Activated naive CD8-positive, alpha-beta T cell treated with anti-CD3 and anti-CD28 coated beads, Interleukin-2, amount 10 ng/mL, durations not matched to agents 7 days and 5 days (primary cell): ENCODE measurements at regions of chr4 and their contacts with region 1.

Region 1: DNA sequence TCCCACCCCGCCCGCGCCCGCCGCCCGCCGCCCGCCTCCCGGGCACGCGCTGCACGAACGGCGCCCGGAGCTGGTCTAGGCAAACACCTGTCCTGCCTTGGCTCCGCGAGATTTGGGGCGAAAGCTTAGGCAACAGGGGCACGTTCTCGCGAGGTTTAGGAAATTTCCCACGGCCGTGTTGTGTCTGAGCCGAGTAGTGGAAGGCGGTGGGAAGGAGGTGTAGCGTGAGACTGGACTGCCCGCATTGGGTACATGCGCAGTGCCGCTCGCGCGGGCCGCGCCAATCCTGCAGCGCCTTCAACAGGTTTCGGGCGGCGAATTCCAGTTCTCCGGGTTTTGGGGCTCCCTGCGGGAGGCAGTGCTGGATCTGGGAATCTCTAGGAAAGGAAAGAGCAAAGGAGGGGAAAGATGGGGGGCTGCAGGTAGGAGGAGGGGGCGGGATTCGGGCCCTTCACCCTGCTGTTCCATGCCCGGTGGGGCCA is 1.3 kb upstream of the RBPJ start:
- DNase-seq: peak; percentile 95
- ATAC-seq: peak; percentile 78
- H3K4me3 Mint-ChIP-seq: peak overlapping the region; percentile 100
- H3K27ac Mint-ChIP-seq: peak overlapping the region; percentile 99
- H3K4me1 Mint-ChIP-seq: peaks cover 39% of the 10 kb centered on the region
- H3K27me3 Mint-ChIP-seq: no peaks in the 10 kb centered on the region

Region 2: DNA sequence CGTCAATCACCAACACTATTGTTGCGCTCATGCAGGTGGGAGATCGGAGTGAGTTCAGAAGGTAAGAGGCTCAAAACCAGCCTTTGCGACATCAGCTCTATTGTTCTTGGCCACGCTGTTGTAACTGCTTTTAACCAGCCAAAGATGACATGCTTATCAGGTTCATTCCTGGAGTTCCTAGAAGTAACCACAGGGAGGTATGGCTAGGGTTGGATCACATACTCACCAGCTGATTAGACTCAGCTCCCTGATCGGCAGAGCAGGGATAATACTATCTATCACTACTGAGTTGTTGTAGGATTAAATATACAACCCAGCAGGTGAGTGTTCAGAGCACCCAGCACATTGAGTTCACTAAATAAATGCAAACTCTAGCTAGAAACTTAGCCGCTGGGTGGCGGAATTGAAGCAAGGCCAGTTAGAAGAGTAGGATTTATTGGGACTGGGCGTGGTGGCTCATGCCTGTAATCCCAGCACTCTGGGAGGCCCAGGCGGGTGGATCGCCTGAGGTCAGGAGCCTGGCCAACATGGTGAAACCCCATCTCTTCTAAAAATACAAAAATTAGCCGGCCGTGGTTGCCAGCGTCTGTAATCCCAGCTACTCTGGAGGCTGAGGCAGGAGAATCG is 651.5 kb before region 1 on chr4:
- POLR2A ChIA-PET with region 1: no interaction called
- DNase-seq: no peak
- ATAC-seq: no peak
- H3K4me3 Mint-ChIP-seq: no peak overlapping the region
- H3K27ac Mint-ChIP-seq: no peak overlapping the region
- H3K4me1 Mint-ChIP-seq: no peaks in the 10 kb centered on the region
- H3K27me3 Mint-ChIP-seq: no peaks in the 10 kb centered on the region

Region 3: DNA sequence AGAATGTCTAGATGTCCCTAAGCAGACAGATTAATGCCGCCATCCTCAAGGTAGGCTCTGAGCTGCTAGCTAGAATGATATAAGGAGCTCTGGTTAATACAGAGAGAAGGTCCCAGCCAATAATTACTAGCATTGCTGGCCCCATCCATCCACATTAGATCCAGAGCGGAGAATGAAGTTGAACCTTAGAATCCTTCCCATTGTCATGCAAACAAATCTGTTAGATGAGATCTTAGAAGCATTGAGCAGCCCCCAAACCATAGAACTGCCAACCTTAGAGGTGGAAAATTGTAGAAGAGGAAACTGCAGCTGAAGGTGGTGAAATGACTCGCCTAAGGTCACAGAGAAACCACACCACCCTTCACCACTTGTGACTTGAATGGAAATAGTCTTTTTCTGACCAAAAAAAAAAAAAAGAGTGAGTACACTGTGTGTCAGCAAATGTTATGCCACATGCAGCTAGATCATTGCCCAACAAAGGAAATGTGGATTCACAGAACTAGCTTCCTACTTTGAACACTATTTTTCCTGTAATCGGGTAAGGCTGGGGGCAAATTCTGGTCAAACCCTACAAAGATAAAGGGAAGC is 243.4 kb before region 1 on chr4:
- POLR2A ChIA-PET with region 1: interaction called, 10 read pairs
- DNase-seq: no peak
- ATAC-seq: peak; percentile 85
- H3K4me3 Mint-ChIP-seq: peak overlapping the region; percentile 12
- H3K27ac Mint-ChIP-seq: peak overlapping the region; percentile 3
- H3K4me1 Mint-ChIP-seq: peaks cover 37% of the 10 kb centered on the region
- H3K27me3 Mint-ChIP-seq: no peaks in the 10 kb centered on the region

Region 4: DNA sequence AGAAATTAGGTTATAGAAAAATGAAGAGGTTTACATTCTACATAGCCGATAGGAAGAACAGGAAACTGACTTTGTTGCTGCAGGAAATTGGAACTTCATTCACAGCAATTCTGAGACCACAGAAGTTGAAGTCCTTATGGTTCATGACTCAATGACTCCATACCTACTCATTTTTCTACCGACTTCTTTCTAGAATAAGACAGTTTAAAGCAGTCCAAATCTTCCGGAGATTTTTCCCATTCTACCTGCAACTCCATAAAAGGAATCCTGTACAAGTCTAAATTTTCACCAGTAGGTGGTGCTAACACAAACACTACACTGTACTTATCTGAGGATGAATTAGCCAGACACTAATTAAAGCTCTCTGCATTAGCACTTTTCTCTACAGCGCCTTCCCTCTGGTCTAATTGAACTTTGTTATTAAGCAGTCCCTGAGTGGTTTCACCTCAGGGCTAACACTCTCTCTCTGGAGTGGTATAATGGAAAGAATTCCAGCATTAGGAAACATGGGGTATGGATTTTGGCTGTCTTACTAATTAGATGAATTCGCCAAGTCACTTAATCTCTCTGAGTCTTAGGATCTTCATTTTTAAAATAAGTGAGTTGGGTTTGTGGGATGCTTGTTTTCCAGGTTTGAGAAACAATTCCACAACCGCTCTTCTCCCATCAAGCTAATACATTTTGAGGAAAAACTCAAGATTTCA is 237.6 kb before region 1 on chr4:
- POLR2A ChIA-PET with region 1: interaction called, 10 read pairs
- DNase-seq: no peak
- ATAC-seq: peak; percentile 60
- H3K4me3 Mint-ChIP-seq: no peak overlapping the region
- H3K27ac Mint-ChIP-seq: no peak overlapping the region
- H3K4me1 Mint-ChIP-seq: peaks cover 34% of the 10 kb centered on the region
- H3K27me3 Mint-ChIP-seq: no peaks in the 10 kb centered on the region